Heart right ventricle (tissue), 16 donors: ENCODE measurements at regions of chr11 and their contacts with region 1.

Region 1: GRCh38 chr11:118659314-118659952 is 20.0 kb downstream of the TREH start:
- DNase-seq: peak; percentile 93 to 94
- ATAC-seq: peak; percentile 76 to 89 (median 82)
- H3K4me3 ChIP-seq: peak overlapping the region in 2 of 10 donors; percentile 0 to 1
- H3K27ac ChIP-seq: peak overlapping the region in 9 of 10 donors; percentile 24 to 81 (median 55)
- H3K4me1 ChIP-seq: peaks cover 0 to 30% (median 15%) of the 10 kb centered on the region in 9 donors
- H3K27me3 ChIP-seq: no peaks in the 10 kb centered on the region
- CTCF ChIP-seq: peak in 8 of 9 donors; percentile 91 to 99 (median 98)

Region 2: GRCh38 chr11:118592616-118593367 is 66.6 kb before region 1 on chr11:
- intact Hi-C with region 1: loop called in 5 of 10 experiments (anchors 2 to 10 kb)
- DNase-seq: peak in 1 of 2 donors; percentile 28
- ATAC-seq: peak in 6 of 8 donors; percentile 77 to 86 (median 80)
- H3K4me3 ChIP-seq: no peak overlapping the region
- H3K27ac ChIP-seq: peak overlapping the region; percentile 0 to 87 (median 70)
- H3K4me1 ChIP-seq: peaks cover 6 to 49% (median 27%) of the 10 kb centered on the region in 9 donors
- H3K27me3 ChIP-seq: no peaks in the 10 kb centered on the region
- CTCF ChIP-seq: no peak

Region 3: DNA sequence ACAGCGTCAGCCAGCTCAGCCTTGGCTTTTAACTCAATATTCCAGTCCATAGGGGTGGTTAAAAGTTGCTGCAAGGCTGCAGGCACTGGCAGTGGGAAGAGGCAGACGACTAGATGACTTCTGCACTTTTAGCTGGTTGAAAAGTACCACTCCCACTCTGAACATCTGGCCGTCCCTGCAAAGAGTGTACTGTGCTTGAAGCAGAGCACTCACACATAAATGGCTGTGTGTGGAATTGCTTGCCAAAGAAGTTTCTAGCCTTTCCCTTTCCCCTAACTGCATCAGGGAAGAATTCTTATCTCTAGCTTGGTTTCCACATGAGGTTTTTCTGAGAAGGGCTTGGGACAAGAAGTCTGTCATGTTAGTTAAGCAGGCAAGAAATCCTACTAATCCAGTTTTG is 57.1 kb before region 1 on chr11:
- intact Hi-C with region 1: loop called in 6 of 10 experiments (anchors 1 to 10 kb)
- DNase-seq: peak; percentile 26 to 70
- ATAC-seq: peak; percentile 21 to 60 (median 44)
- H3K4me3 ChIP-seq: no peak overlapping the region
- H3K27ac ChIP-seq: peak overlapping the region; percentile 6 to 91 (median 74)
- H3K4me1 ChIP-seq: peaks cover 5 to 56% (median 32%) of the 10 kb centered on the region in 9 donors
- H3K27me3 ChIP-seq: peaks cover 0 to 8% (median 0%) of the 10 kb centered on the region in 7 donors
- CTCF ChIP-seq: no peak

Region 4: GRCh38 chr11:118610804-118611795 is 48.3 kb before region 1 on chr11:
- intact Hi-C with region 1: loop called in 5 of 10 experiments (anchors 1 to 5 kb)
- DNase-seq: peak; percentile 86
- ATAC-seq: peak; percentile 32 to 55 (median 47)
- H3K4me3 ChIP-seq: peak overlapping the region; percentile 60 to 97 (median 74)
- H3K27ac ChIP-seq: peak overlapping the region; percentile 91 to 99 (median 94)
- H3K4me1 ChIP-seq: peaks cover 3 to 81% (median 37%) of the 10 kb centered on the region in 9 donors
- H3K27me3 ChIP-seq: peaks cover 0 to 56% (median 0%) of the 10 kb centered on the region in 7 donors
- CTCF ChIP-seq: peak; percentile 88 to 98 (median 93)

Region 5: DNA sequence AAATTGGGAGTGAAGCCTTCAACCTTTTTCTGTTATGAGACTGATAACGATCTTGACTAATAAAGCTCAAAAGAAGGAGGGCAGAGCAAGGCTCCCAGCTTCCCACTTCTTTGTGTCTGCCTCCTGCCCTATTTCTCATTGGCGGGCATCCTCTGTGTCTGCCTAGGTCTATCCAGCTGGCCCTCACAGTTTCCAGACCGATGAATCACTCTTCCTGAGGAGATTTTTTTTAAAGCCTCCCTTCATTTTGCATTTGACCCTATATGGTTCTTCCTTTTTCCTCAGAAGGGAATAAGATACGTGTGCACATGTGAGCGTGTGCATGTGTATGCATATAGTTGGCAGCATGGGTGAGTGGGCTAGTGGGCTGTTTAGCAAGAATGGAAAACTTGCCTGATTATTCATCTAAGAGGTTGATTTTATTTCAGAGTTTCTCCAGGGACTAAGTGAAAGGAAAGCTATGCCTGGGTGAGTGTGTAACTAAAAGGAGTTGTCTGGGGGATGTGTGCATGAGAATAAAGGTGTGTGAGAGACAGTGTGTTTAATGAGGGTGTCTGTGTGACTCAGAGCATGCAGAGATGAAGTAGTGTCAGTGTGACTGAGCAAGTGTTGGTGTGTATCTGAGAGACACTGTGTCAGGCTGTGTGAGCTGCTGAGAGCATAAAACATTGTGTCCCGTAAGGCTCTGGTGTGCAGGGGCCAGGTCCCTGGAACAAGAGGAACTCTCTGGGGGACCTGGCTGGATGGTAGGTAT is 39.8 kb before region 1 on chr11:
- intact Hi-C with region 1: loop called in 2 of 10 experiments (anchors 5 kb)
- DNase-seq: peak in 1 of 2 donors; percentile 77
- ATAC-seq: peak in 7 of 8 donors; percentile 7 to 46 (median 26)
- H3K4me3 ChIP-seq: peak overlapping the region in 1 of 10 donors; percentile 4
- H3K27ac ChIP-seq: peak overlapping the region; percentile 70 to 96 (median 90)
- H3K4me1 ChIP-seq: peaks cover 46 to 100% (median 79%) of the 10 kb centered on the region in 9 donors
- H3K27me3 ChIP-seq: peaks cover 0 to 16% (median 0%) of the 10 kb centered on the region in 7 donors
- CTCF ChIP-seq: no peak

Region 6: DNA sequence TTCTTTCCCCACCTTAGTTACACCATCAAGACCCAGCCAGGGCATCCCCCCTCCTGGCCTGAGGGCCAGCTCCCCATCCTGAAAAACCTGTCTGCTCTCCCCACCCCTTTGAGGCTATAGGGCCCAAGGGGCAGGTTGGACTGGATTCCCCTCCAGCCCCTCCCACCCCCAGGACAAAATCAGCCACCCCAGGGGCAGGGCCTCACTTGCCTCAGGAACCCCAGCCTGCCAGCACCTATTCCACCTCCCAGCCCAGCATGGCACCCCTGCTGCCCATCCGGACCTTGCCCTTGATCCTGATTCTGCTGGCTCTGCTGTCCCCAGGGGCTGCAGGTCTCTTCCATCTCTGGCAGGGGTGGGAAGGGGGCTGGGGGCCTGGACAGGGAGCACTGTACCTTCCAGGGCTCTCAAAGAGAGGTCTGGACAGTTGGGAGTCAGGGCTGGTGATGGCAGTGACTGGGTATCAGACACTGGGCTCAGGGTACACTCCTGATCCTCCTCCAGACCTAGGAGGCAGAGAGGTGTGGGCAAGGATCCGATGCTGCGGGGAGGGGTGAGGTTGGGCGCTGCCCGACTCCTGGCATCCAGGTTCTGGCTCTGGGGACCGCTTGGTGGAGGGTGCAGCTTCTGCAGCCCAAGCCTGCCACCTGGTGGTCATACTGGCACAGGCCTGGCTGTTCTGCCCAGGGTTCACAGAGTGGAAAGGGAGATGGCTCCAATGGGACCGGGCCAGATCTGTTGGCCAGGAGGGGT is 296.8 kb after region 1 on chr11 and contains the start of gene UPK2:
- intact Hi-C with region 1: loop called in 1 of 10 experiments (anchors 10 kb)
- DNase-seq: peak; percentile 85 to 89
- ATAC-seq: peak; percentile 95 to 98 (median 96)
- H3K4me3 ChIP-seq: no peak within 1 kb of the TSS
- H3K27ac ChIP-seq: no peak within 1 kb of the TSS
- H3K4me1 ChIP-seq: peaks cover 0 to 5% (median 0%) of the 10 kb centered on the region in 9 donors
- H3K27me3 ChIP-seq: peaks cover 0 to 20% (median 4%) of the 10 kb centered on the region in 7 donors
- CTCF ChIP-seq: peak; percentile 88 to 98 (median 95)
- total RNA-seq, gene UPK2: not detected